RWPE1 (cell line): ENCODE measurements at regions of chr10 and their contacts with region 1.

Region 1: GRCh38 chr10:103192451-103193106 is 493 bp downstream of the NT5C2 start:
- DNase-seq: peak; percentile 36
- H3K27ac ChIP-seq: peak overlapping the region; percentile 88
- CTCF ChIP-seq: no peak

Region 2: DNA sequence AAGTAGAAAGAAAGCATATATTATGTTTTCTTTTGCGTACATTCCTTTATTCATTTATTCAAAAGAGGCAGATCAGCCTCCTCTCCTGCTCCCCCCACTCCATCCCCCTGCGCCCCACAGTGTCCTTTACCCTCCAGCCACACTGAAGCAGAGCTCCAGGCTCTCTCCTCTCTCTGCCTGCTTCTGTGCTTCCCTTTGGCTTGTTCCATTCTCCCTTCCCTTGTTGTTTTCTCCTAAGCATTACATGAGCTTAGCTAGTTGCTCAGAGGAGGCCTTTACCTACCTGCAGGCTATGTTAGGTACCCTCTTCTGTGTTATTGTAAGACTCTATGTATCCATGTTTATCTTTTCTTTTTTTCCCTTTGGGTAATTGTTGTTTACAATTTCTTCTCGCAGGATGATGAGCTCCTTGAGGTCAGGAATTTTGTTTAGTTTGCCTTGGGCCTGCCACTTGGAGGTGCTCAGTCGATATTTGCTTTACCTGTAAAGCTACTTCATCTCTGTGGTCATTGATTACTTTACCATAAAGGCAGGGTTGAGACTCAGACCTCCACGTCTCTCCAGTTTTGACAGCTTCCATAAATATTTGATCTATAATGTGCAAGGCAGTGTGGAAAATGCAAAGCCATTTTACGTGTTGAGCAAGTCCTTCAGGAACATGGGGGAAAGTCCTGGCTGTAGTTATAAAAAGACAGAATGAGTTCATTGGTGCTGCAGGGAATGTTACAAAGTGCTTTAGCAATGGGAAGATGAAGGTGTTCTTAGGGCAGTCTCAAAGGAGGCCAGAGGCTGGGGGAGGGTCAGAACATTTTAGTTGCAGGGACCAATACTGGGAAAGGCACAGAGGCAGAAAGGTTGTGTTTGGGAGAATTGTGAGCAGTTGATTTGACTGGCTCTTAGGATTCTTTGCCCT is 246.9 kb before region 1 on chr10:
- CTCF ChIA-PET with region 1: no interaction called
- POLR2A ChIA-PET with region 1: no interaction called
- DNase-seq: no peak
- H3K27ac ChIP-seq: no peak overlapping the region
- CTCF ChIP-seq: no peak

Region 3: DNA sequence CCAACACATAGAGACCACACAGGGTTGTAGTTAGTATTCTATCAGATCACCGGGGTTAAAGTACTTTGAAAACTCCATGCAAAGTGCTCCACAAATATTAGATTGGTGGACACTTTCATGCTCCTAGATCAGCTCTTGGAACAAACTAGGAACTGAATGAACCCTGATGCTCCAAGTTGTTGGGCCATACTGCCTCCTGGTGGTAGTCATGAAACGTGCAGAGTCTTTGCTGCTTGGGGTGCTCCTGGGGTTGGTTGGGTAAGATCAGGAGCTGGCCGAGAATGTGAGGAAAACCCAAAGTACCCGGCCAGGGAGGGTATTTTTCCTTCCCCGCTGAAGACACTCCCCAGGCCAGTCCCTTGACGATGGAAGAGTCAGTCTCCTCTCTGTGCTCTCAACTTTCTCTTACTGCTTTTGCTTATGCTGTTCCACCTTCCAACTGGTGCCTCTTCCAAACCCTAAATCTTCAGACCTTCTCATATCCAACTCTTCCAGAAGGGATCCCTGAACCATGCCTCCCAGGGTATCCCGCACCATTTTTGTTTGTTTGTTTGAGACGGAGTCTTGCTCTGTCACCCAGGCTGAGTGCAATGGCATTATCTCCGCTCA is 52.2 kb after region 1 on chr10:
- CTCF ChIA-PET with region 1: interaction called, 12 read pairs
- POLR2A ChIA-PET with region 1: interaction called, 9 read pairs
- DNase-seq: peak; percentile 72
- H3K27ac ChIP-seq: no peak overlapping the region
- CTCF ChIP-seq: peak; percentile 31; the same call in 1 of the 2 replicates

Region 4: GRCh38 chr10:103327906-103328305 is 135.3 kb after region 1 on chr10:
- CTCF ChIA-PET with region 1: no interaction called
- POLR2A ChIA-PET with region 1: interaction called, 12 read pairs
- DNase-seq: no peak
- H3K27ac ChIP-seq: no peak overlapping the region
- CTCF ChIP-seq: no peak